Activated B cell treated with CpG ODN at 0.5 μM for 24 hours (primary cell): ENCODE measurements at regions of chr2 and their contacts with region 1.

Region 1: DNA sequence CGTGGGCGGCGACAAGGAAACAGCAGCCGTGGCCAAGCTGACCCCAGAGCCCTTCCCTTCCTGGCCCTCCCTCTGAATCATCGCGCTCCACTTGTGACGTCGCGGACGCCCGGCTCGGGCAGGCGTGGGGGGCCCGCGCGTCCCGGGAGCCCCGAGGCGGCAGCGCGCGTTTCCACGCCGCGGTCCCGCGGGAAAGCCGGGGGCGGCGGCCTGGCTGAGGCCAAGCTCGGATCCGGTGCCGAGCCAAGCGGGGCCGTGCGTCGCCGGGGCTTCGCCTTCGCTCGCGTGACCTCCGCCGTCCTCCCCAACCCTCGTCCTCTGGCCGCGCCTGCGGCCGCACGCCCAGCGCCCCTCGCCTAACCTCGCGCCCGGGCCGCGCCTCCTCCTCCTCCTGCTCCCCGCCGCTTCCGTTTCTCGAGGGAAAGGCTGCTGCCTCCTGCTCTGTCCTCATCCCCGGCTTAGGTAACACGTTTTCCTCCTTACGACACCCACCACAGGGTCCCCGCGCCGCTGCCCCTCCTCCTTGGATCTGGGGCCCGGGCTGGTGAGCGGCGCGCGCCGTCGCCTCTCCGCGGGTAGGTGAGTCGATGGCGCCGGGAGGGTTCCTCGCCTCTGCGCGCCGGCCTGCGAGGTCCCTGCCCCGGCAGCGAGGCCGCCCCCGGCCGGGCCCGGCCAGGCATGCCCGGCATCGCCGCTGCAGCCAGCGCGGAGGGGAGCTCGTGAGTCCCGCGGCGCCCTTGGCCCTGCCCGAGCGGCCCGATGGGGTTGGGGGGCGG is at the start of gene INPP1:
- DNase-seq: peak; percentile 45
- ATAC-seq: peak; percentile 66
- H3K4me3 Mint-ChIP-seq: peak within 1 kb of the TSS; percentile 87
- H3K27ac Mint-ChIP-seq: peak within 1 kb of the TSS; percentile 47
- H3K4me1 Mint-ChIP-seq: peaks cover 9% of the 10 kb centered on the region
- H3K27me3 Mint-ChIP-seq: no peaks in the 10 kb centered on the region
- CTCF ChIP-seq: no peak
- total RNA-seq, gene INPP1: 4.2 and 4.8 TPM in 2 replicates

Region 2: DNA sequence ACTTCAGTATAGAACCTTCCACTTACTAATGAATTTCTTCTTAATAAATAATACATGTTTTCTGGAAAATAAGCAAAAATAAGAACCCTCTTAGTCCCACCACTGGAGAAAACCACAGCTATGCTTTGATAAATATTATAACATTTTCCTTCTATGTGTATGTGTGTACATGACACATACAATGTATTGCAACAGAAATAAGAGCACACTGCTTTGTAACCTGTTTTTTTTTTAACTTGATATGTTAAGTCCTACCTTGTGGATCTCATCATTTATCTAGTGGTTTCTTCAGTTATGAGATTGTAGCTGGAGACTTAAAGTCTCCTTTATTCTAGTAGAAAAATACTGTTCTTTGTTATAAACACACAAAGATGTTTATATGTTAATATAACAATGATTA is 16.9 kb after region 1 on chr2:
- CTCF ChIA-PET with region 1: interaction called, 4 read pairs
- POLR2A ChIA-PET with region 1: interaction called, 7 read pairs
- intact Hi-C with region 1: loop called (anchors 1 kb)
- DNase-seq: no peak
- ATAC-seq: no peak
- H3K4me3 Mint-ChIP-seq: peak overlapping the region; percentile 89
- H3K27ac Mint-ChIP-seq: peak overlapping the region; percentile 89
- H3K4me1 Mint-ChIP-seq: peaks cover 24% of the 10 kb centered on the region
- H3K27me3 Mint-ChIP-seq: no peaks in the 10 kb centered on the region
- CTCF ChIP-seq: no peak